GM12878 (cell line): ENCODE measurements at regions of chr1 and their contacts with region 1.

Region 1: GRCh38 chr1:63892632-63893395 is 119.0 kb downstream of the ROR1 start:
- DNase-seq: peak; percentile 80
- ATAC-seq: peak; percentile 98
- H3K4me3 ChIP-seq: no peak overlapping the region
- H3K27ac ChIP-seq: no peak overlapping the region
- H3K4me1 ChIP-seq: peaks cover 18% of the 10 kb centered on the region
- H3K27me3 ChIP-seq: no peaks in the 10 kb centered on the region
- CTCF ChIP-seq: no peak
- EP300 ChIP-seq: peak in 1 of 2 experiments; percentile 52; a peak in 1 of 4 replicates
- POLR2A ChIP-seq: no peak
- RAD21 ChIP-seq: no peak

Region 2: DNA sequence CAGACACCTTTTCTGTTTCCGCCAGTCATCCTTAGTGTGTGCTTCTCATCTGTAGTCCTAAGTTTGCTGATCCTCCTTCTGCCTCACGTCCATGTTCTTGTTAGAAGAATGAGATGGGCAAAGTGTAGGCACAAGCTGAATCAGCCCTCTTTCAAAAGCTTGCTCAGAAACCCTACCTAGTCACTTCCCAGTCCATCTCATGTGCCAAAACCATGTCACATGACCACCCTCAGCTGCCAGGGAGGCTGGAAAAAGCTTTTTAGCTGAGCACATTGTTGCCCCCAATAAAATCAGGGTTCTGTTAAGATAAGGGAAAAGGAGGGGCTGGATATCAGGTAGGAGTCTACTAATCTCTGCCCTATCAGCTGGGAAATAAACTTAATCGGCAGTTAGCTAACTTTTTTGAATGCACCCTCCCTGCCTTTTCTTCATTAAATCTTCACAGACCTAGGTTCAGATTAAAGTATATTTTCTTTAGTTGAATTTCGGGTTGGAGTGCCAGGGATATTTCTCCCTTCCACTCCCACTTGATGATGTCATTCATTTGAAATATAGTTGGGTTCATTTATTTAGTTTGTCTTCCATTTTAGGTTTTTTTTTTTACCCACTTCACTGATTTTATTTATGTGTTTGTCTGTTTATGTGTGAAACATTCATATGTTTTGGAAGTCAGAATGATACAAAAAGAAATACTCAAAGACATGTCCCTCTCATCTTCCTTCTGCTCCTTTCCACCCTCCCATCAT is 10.2 kb after region 1 on chr1:
- CTCF ChIA-PET with region 1: interaction called, 3 read pairs
- POLR2A ChIA-PET with region 1: interaction called, 3 read pairs
- RAD21 ChIA-PET with region 1: interaction called, 3 read pairs
- SMC1A ChIA-PET with region 1: interaction called, 11 read pairs
- in situ Hi-C with region 1: no loop called
- intact Hi-C with region 1: no loop called
- DNase-seq: no peak
- ATAC-seq: no peak
- H3K4me3 ChIP-seq: no peak overlapping the region
- H3K27ac ChIP-seq: no peak overlapping the region
- H3K4me1 ChIP-seq: no peaks in the 10 kb centered on the region
- H3K27me3 ChIP-seq: no peaks in the 10 kb centered on the region
- CTCF ChIP-seq: no peak
- EP300 ChIP-seq: no peak
- POLR2A ChIP-seq: no peak
- RAD21 ChIP-seq: no peak